RWPE1 (cell line): ENCODE measurements at regions of chr2 and their contacts with region 1.

Region 1: GRCh38 chr2:88557290-88557689 is 70.0 kb downstream of the EIF2AK3 start:
- DNase-seq: no peak
- H3K27ac ChIP-seq: no peak overlapping the region
- CTCF ChIP-seq: no peak

Region 2: DNA sequence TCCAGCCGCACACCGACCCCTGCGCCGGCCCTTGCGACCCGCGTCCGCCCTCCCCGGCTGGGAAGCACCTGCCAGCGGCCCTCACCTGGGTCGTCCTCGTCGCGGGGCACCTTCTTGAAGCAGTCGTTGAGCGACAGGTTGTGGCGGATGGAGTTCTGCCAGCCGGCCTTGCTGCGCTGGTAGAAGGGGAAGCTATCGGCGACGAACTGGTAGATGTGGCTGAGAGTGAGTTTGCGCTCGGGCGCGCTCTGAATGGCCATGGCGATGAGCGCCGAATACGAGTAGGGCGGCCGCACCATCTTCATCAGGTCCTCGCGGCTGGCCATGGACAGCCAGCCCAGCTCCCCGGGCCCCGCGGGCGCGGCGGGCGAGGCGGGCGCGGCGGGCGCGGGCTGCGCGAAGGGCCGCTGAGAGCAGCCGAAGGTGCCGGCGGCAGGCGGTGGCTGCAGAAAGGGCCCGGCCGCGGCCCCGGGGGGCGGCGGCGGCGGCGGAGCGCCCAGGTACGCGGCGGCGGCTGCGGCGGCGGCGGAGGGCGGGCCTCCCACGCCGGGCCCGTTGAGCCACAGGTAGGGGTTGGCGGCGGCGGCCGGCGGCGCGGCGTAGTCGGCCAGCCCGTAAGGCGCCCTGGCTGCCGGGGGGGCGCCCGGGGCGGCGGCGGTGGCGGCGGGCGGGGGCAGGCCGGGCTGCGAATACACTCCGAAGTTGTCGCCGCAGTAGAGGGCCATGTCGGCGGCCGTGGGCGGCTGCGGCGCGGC is 105.3 kb before region 1 on chr2:
- CTCF ChIA-PET with region 1: interaction called, 10 read pairs
- POLR2A ChIA-PET with region 1: no interaction called
- DNase-seq: no peak
- H3K27ac ChIP-seq: no peak overlapping the region
- CTCF ChIP-seq: no peak

Region 3: GRCh38 chr2:88606371-88607030 is 49.2 kb after region 1 on chr2:
- CTCF ChIA-PET with region 1: no interaction called
- POLR2A ChIA-PET with region 1: no interaction called
- DNase-seq: no peak
- H3K27ac ChIP-seq: no peak overlapping the region
- CTCF ChIP-seq: no peak